ENCODE measurements at regions of chr1 and their contacts with region 1.

Region 1: GRCh38 chr1:88661951-88662699 is 21.9 kb upstream of the PKN2 start:
- DNase-seq: no peak
- H3K4me3 ChIP-seq: no peak overlapping the region
- H3K27ac ChIP-seq: no peak overlapping the region
- H3K4me1 ChIP-seq: no peaks in the 10 kb centered on the region
- H3K27me3 ChIP-seq: no peaks in the 10 kb centered on the region
- CTCF ChIP-seq: no peak
- POLR2A ChIP-seq: no peak

Region 2: GRCh38 chr1:88549536-88549935 is 112.6 kb before region 1 on chr1:
- intact Hi-C with region 1: no loop called
- DNase-seq: no peak
- H3K4me3 ChIP-seq: no peak overlapping the region
- H3K27ac ChIP-seq: no peak overlapping the region
- H3K4me1 ChIP-seq: no peaks in the 10 kb centered on the region
- H3K27me3 ChIP-seq: no peaks in the 10 kb centered on the region
- CTCF ChIP-seq: peak in 1 of 3 experiments; percentile 21
- POLR2A ChIP-seq: no peak

Region 3: DNA sequence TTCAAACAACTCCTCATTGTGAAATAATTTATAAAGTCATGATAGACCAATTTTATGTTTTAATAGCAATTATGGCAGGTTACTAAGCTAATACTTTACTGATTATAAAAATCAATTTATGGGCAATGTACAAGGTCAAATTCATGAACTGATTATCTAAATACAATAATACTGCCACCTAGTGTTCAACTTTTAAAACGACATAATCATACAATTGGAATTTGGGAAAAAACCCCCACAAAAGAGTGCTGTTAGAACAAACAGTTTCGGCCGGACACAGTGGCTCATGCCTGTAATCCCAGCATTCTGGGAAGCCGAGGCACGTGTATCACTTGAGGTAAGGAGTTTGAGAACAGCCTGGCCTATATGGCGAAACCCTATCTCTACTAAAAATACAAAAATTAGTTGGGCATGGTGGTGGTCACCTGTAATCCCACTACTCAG is 215.3 kb after region 1 on chr1:
- intact Hi-C with region 1: loop called (anchors 10 kb)
- DNase-seq: no peak
- H3K4me3 ChIP-seq: no peak overlapping the region
- H3K27ac ChIP-seq: no peak overlapping the region
- H3K4me1 ChIP-seq: peaks cover 40% of the 10 kb centered on the region
- H3K27me3 ChIP-seq: no peaks in the 10 kb centered on the region
- CTCF ChIP-seq: peak; percentile 23 to 54 (median 36)
- POLR2A ChIP-seq: no peak